CD4-positive, alpha-beta memory T cell (primary cell): ENCODE measurements at regions of chrX and their contacts with region 1.

Region 1: GRCh38 chrX:71541210-71542022 is 8.5 kb downstream of the OGT start:
- DNase-seq: peak in 1 of 5 donors; percentile 55
- H3K4me3 ChIP-seq: peak overlapping the region in 1 of 2 donors; percentile 38
- H3K4me3 Mint-ChIP-seq: peak overlapping the region; percentile 68 to 98 (median 76)
- H3K27ac ChIP-seq: peak overlapping the region; percentile 35
- H3K27ac Mint-ChIP-seq: peak overlapping the region; percentile 0 to 97 (median 71)
- H3K4me1 ChIP-seq: peaks cover 74% of the 10 kb centered on the region
- H3K4me1 Mint-ChIP-seq: peaks cover 45 to 83% (median 56%) of the 10 kb centered on the region in 4 donors
- H3K27me3 ChIP-seq: no peaks in the 10 kb centered on the region
- H3K27me3 Mint-ChIP-seq: no peaks in the 10 kb centered on the region

Region 2: DNA sequence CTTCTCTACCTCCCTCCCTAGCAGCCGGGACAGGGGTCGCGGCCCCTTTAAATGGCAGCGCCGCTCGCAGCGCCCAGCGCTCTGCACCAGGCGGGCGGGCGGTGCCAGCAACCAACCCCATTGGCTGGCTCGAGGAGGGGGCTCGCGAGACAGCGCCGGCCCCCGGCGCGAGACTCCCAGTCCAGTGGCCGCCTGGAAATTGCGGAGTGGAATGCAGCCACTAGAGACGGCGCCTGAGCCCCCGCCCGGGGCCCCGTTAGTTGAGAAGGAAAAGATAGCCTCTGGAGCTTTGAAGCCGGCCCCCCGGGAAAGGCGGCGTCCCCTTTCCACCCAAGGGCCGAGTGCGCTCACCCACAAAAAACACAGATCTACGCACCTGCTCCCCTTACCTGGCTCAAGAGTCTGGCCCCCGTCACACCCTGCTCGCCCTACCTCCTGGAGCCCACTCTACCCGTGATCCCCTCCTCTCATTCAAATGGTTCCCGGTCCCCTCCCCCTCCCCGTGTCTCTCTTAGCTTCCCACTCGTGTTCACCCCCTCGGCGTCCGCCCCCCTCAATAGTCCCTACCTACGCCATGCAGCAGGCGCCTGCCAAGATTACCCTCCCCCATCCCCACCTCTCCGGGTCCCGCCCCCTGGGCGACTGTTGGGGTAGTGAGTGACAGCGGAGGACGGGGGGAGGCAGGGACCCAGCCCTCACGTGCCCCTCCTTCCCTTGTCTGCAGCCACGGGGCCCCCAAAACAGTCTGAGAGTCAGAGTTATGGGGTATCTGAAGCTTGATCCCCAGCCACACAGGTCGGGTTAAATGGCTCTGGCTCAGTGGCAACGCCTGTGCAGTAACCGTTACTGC is 287.1 kb before region 1 on chrX and contains the start of gene ZMYM3:
- CTCF ChIA-PET with region 1: no interaction called
- POLR2A ChIA-PET with region 1: no interaction called
- intact Hi-C with region 1: no loop called
- DNase-seq: peak; percentile 75 to 86 (median 77)
- H3K4me3 ChIP-seq: peak within 1 kb of the TSS; percentile 52 to 81
- H3K4me3 Mint-ChIP-seq: peak within 1 kb of the TSS; percentile 90 to 98 (median 92)
- H3K27ac ChIP-seq: peak within 1 kb of the TSS; percentile 77
- H3K27ac Mint-ChIP-seq: peak within 1 kb of the TSS; percentile 93 to 97 (median 95)
- H3K4me1 ChIP-seq: peaks cover 25% of the 10 kb centered on the region
- H3K4me1 Mint-ChIP-seq: peaks cover 5 to 32% (median 13%) of the 10 kb centered on the region in 4 donors
- H3K27me3 ChIP-seq: no peaks in the 10 kb centered on the region
- H3K27me3 Mint-ChIP-seq: no peaks in the 10 kb centered on the region
- total RNA-seq, gene ZMYM3: 28.0 to 28.2 TPM

Region 3: GRCh38 chrX:71466979-71467523 is 74.4 kb before region 1 on chrX:
- CTCF ChIA-PET with region 1: no interaction called
- POLR2A ChIA-PET with region 1: no interaction called
- intact Hi-C with region 1: loop called (anchors 5 kb)
- DNase-seq: no peak
- H3K4me3 ChIP-seq: no peak overlapping the region
- H3K4me3 Mint-ChIP-seq: no peak overlapping the region
- H3K27ac ChIP-seq: no peak overlapping the region
- H3K27ac Mint-ChIP-seq: no peak overlapping the region
- H3K4me1 ChIP-seq: no peaks in the 10 kb centered on the region
- H3K4me1 Mint-ChIP-seq: no peaks in the 10 kb centered on the region
- H3K27me3 ChIP-seq: no peaks in the 10 kb centered on the region
- H3K27me3 Mint-ChIP-seq: no peaks in the 10 kb centered on the region

Region 4: DNA sequence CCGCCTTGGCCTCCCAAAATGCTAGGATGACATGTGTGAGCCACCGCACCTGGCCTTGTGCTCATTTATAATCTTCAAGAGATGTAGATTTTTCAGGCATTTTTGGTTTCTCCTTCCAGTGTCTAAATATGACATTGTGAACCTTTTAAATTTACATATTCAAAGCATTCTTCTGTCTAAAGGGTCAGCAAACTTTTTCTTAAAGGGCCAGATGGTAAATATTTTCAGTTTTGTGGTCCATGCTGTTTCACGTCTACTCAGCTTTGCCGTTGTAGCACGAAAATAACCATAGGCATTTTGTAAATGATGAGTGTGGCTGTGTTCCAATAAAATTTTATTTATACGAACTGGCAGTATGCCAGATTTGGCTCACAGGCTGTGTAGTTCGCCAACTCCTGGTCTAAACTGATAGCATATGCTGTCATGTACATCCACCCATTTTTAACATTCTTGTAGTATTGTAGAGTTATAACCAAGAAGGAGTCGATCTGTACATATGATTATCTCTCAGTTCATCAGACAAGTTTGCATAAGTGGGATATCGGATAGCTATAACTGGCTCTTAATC is 24.1 kb after region 1 on chrX:
- CTCF ChIA-PET with region 1: no interaction called
- POLR2A ChIA-PET with region 1: no interaction called
- intact Hi-C with region 1: no loop called
- DNase-seq: no peak
- H3K4me3 ChIP-seq: no peak overlapping the region
- H3K4me3 Mint-ChIP-seq: no peak overlapping the region
- H3K27ac ChIP-seq: no peak overlapping the region
- H3K27ac Mint-ChIP-seq: no peak overlapping the region
- H3K4me1 ChIP-seq: no peaks in the 10 kb centered on the region
- H3K4me1 Mint-ChIP-seq: peaks cover 0 to 6% (median 3%) of the 10 kb centered on the region in 4 donors
- H3K27me3 ChIP-seq: no peaks in the 10 kb centered on the region
- H3K27me3 Mint-ChIP-seq: no peaks in the 10 kb centered on the region